SK-N-SH (cell line): ENCODE measurements at regions of chr16 and their contacts with region 1.

Region 1: DNA sequence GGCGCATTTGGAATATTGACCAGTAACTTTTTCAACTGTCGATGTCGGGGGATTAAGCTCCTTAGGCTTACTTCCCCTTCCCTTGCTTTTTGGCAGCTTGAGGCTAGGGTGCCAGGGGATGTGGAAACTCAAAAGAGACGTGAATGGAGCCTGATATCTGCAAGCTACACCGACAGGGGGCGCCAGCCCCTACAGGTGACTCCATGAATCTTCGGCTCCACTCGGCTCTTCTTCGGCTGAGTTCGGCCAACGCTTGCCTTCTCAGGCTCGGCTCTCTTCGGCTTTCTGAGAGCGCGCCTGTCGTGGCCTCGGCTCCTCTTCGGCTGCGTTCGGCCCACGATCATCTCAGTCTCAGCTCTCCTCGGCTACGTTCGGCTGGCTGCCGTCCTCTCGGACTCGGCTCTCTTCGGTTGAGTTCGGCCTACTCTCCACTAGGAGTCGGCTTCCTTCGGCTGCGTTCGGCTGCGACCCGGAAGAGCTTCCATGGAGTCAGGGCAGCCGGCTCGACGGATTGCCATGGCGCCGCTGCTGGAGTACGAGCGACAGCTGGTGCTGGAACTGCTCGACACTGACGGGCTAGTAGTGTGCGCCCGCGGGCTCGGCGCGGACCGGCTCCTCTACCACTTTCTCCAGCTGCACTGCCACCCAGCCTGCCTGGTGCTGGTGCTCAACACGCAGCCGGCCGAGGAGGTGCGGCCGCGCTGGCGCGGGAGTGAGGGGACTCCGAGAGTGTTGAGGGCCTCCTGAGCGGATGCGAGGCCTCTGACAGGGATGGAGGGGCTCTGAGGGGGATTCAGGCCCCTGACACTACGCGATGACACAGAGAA is at the start of gene ERCC4:
- DNase-seq: peak; percentile 96
- H3K4me3 ChIP-seq: peak within 1 kb of the TSS; percentile 92 to 99
- H3K27ac ChIP-seq: peak within 1 kb of the TSS; percentile 13 to 79; a peak in 3 of 4 replicates
- H3K4me1 ChIP-seq: peaks cover 4 to 13% of the 10 kb centered on the region in 2 experiments; a peak in 2 of 4 replicates
- H3K27me3 ChIP-seq: peaks cover 2% of the 10 kb centered on the region; the same call in 1 of the 2 replicates
- CTCF ChIP-seq: peak; percentile 94
- EP300 ChIP-seq: 0 out of 4 replicates have a peak, but pooled peaks of 1 of the 2 experiments have one; percentile 9
- RAD21 ChIP-seq: peak; percentile 56
- polyA plus RNA-seq, gene ERCC4: 1.8 and 2.8 TPM in 2 replicates

Region 2: DNA sequence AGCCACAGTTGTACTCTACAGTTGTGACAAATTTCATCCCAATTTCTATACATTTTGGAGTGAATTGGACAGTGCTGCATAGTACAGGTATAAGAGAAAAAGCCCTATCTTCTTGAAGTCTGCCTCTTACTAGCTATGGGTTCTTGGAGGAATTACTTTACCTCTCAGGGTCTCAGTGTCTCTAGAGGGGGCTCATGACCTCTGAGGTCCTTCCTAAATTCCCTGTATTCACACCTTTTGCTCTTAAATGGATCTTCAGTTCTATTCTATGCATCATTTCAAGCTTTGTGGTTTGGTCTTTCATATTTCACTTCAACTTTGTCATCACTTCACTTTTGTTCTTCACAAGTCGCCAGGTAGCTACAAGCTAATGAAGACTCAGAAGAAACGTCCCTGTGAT is 71.1 kb before region 1 on chr16:
- CTCF ChIA-PET with region 1: no interaction called
- POLR2A ChIA-PET with region 1: no interaction called
- DNase-seq: no peak
- H3K4me3 ChIP-seq: no peak overlapping the region
- H3K27ac ChIP-seq: no peak overlapping the region
- H3K4me1 ChIP-seq: no peaks in the 10 kb centered on the region
- H3K27me3 ChIP-seq: no peaks in the 10 kb centered on the region
- CTCF ChIP-seq: no peak
- EP300 ChIP-seq: no peak
- RAD21 ChIP-seq: no peak

Region 3: GRCh38 chr16:13896543-13897183 is 23.2 kb before region 1 on chr16:
- CTCF ChIA-PET with region 1: interaction called, 10 read pairs
- POLR2A ChIA-PET with region 1: no interaction called
- DNase-seq: no peak
- H3K4me3 ChIP-seq: no peak overlapping the region
- H3K27ac ChIP-seq: no peak overlapping the region
- H3K4me1 ChIP-seq: no peaks in the 10 kb centered on the region
- H3K27me3 ChIP-seq: no peaks in the 10 kb centered on the region; the same call in 1 of the 2 replicates
- CTCF ChIP-seq: peak; percentile 41
- EP300 ChIP-seq: no peak
- RAD21 ChIP-seq: no peak

Region 4: GRCh38 chr16:13935408-13935807 is 15.5 kb after region 1 on chr16:
- CTCF ChIA-PET with region 1: interaction called, 29 read pairs
- POLR2A ChIA-PET with region 1: interaction called, 3 read pairs
- DNase-seq: no peak
- H3K4me3 ChIP-seq: no peak overlapping the region; a peak in 1 of 4 replicates
- H3K27ac ChIP-seq: no peak overlapping the region
- H3K4me1 ChIP-seq: peaks cover 0 to 3% of the 10 kb centered on the region in 2 experiments; a peak in 1 of 4 replicates
- H3K27me3 ChIP-seq: no peaks in the 10 kb centered on the region
- CTCF ChIP-seq: peak; percentile 55
- EP300 ChIP-seq: no peak
- RAD21 ChIP-seq: no peak

Region 5: GRCh38 chr16:13940397-13940933 is 20.6 kb after region 1 on chr16:
- CTCF ChIA-PET with region 1: interaction called, 29 read pairs
- POLR2A ChIA-PET with region 1: interaction called, 3 read pairs
- DNase-seq: peak; percentile 24
- H3K4me3 ChIP-seq: no peak overlapping the region
- H3K27ac ChIP-seq: no peak overlapping the region
- H3K4me1 ChIP-seq: peaks cover 0 to 8% of the 10 kb centered on the region in 2 experiments; a peak in 2 of 4 replicates
- H3K27me3 ChIP-seq: no peaks in the 10 kb centered on the region
- CTCF ChIP-seq: no peak
- EP300 ChIP-seq: no peak
- RAD21 ChIP-seq: no peak

Region 6: GRCh38 chr16:14186007-14186794 is 266.3 kb after region 1 on chr16:
- CTCF ChIA-PET with region 1: interaction called, 17 read pairs
- POLR2A ChIA-PET with region 1: no interaction called
- DNase-seq: peak; percentile 59
- H3K4me3 ChIP-seq: peak overlapping the region; percentile 42 to 51
- H3K27ac ChIP-seq: peak overlapping the region; percentile 63 to 77
- H3K4me1 ChIP-seq: peaks cover 0 to 18% of the 10 kb centered on the region in 2 experiments; a peak in 3 of 4 replicates
- H3K27me3 ChIP-seq: no peaks in the 10 kb centered on the region
- CTCF ChIP-seq: peak; percentile 62
- EP300 ChIP-seq: no peak
- RAD21 ChIP-seq: peak; percentile 34; the same call in 1 of the 2 replicates

Region 7: DNA sequence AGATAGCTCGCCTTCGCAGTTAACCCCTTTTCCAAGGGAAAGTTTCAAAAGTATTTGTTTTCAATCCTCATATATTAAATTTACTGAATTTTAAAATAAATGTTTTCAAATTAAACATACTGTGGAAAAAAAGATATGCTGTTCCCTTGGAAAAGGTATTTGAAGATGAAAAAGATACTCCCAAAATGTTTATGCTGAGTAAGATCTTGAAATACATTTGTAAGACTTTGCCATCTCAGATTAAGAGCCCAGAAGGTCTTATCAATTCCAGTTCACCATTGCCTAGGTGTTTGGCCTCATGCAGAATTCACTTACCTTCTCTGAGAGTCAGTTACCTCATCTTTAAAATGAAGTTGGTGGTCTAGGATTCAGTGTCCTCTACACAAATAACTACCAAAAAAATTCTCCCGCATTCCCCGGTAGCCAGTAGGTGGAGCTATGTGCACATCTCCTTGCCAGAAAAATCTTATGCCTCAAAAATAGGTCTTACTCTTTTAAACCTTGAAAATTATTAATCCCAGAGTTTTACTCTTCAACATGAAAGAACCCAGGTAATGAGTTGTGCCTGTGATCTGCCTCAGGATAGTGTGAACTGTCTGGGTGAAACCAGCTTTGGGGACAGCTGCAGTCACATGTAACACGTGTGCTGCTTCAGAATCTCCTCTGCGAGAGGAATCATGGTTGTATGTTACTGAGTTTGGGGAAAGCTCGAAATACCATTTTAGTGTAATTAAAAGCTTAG is 329.6 kb after region 1 on chr16:
- CTCF ChIA-PET with region 1: interaction called, 18 read pairs
- POLR2A ChIA-PET with region 1: interaction called, 4 read pairs
- DNase-seq: peak; percentile 54
- H3K4me3 ChIP-seq: no peak overlapping the region; a peak in 1 of 4 replicates
- H3K27ac ChIP-seq: no peak overlapping the region
- H3K4me1 ChIP-seq: no peaks in the 10 kb centered on the region
- H3K27me3 ChIP-seq: no peaks in the 10 kb centered on the region
- CTCF ChIP-seq: peak; percentile 97
- EP300 ChIP-seq: no peak
- RAD21 ChIP-seq: peak; percentile 82

Region 8: DNA sequence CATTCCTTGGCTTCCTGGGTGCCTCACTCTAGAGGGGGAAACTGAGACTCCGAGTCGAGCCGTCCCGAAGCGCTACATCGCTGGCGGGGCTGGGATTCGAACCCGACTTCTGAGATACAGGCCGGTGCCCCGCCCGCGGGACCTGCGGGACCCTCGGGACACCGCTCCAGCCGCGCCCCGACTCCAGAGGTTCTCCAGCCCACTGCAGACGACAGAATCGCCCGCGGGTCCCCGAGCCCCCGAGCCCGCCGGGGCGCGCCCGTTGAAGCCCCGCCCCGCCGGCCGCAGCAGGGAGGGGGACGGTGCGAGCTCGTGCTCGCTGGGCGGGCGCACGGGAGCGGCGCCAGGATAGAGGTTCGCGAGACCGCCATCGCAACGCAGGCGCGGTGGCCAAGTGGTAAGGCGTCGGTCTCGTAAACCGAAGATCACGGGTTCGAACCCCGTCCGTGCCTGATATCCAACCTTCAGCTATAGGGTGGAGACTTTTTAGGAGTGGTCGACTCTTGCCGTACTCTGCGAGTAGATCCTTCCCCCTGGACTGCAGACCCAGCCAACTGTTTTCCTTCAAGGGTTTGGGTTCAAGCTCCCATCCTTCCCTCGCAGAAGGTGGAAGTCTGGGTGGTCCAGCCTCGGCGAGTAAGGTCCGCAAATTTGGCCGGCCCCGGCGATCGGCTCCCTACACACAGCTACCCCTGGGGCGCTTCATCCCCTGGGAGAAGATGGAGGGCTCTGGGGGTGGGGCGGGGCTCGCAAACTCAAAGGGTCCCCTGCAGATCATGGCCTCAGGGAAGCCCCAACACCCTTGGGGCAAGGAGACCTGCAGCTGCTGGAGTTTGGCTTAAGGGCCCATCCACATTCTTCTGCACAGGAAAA is 365.9 kb after region 1 on chr16:
- CTCF ChIA-PET with region 1: interaction called, 19 read pairs
- POLR2A ChIA-PET with region 1: interaction called, 3 read pairs
- DNase-seq: peak; percentile 96
- H3K4me3 ChIP-seq: peak overlapping the region; percentile 84 to 97
- H3K27ac ChIP-seq: peak overlapping the region; percentile 40 to 61; a peak in 3 of 4 replicates
- H3K4me1 ChIP-seq: peaks cover 0 to 10% of the 10 kb centered on the region in 2 experiments; a peak in 1 of 4 replicates
- H3K27me3 ChIP-seq: no peaks in the 10 kb centered on the region
- CTCF ChIP-seq: no peak
- EP300 ChIP-seq: no peak
- RAD21 ChIP-seq: no peak